Activated CD4-positive, alpha-beta T cell treated with anti-CD3 and anti-CD28 coated beads, Interleukin-2, amount 10 ng/mL, durations not matched to agents 24 days and 14 days (primary cell): ENCODE measurements at regions of chr16 and their contacts with region 1.

Region 1: GRCh38 chr16:76653390-76654026 is 376.3 kb downstream of the CNTNAP4 start:
- DNase-seq: no peak
- H3K4me3 Mint-ChIP-seq: no peak overlapping the region
- H3K27ac Mint-ChIP-seq: no peak overlapping the region
- H3K4me1 Mint-ChIP-seq: no peaks in the 10 kb centered on the region
- H3K27me3 Mint-ChIP-seq: no peaks in the 10 kb centered on the region

Region 2: GRCh38 chr16:75761108-75761507 is 892.4 kb before region 1 on chr16:
- intact Hi-C with region 1: no loop called
- DNase-seq: no peak
- H3K4me3 Mint-ChIP-seq: no peak overlapping the region
- H3K27ac Mint-ChIP-seq: no peak overlapping the region
- H3K4me1 Mint-ChIP-seq: peaks cover 5% of the 10 kb centered on the region
- H3K27me3 Mint-ChIP-seq: peaks cover 3% of the 10 kb centered on the region

Region 3: GRCh38 chr16:75789237-75789636 is 864.3 kb before region 1 on chr16:
- intact Hi-C with region 1: loop called (anchors 5 kb)
- DNase-seq: peak; percentile 73
- H3K4me3 Mint-ChIP-seq: no peak overlapping the region
- H3K27ac Mint-ChIP-seq: no peak overlapping the region
- H3K4me1 Mint-ChIP-seq: no peaks in the 10 kb centered on the region
- H3K27me3 Mint-ChIP-seq: peaks cover 5% of the 10 kb centered on the region

Region 4: GRCh38 chr16:76724181-76724580 is 70.7 kb after region 1 on chr16:
- intact Hi-C with region 1: no loop called
- DNase-seq: no peak
- H3K4me3 Mint-ChIP-seq: no peak overlapping the region
- H3K27ac Mint-ChIP-seq: no peak overlapping the region
- H3K4me1 Mint-ChIP-seq: no peaks in the 10 kb centered on the region
- H3K27me3 Mint-ChIP-seq: no peaks in the 10 kb centered on the region

Region 5: GRCh38 chr16:76780556-76780955 is 127.0 kb after region 1 on chr16:
- intact Hi-C with region 1: no loop called
- DNase-seq: no peak
- H3K4me3 Mint-ChIP-seq: no peak overlapping the region
- H3K27ac Mint-ChIP-seq: no peak overlapping the region
- H3K4me1 Mint-ChIP-seq: no peaks in the 10 kb centered on the region
- H3K27me3 Mint-ChIP-seq: no peaks in the 10 kb centered on the region